K562 (cell line): ENCODE measurements at regions of chr6 and their contacts with region 1.

Region 1: GRCh38 chr6:149840345-149841075 is 23.6 kb downstream of the LRP11 start:
- DNase-seq: peak; percentile 69 to 88 (median 78)
- ATAC-seq: peak; percentile 99
- H3K4me3 ChIP-seq: no peak overlapping the region
- H3K27ac ChIP-seq: no peak overlapping the region
- H3K4me1 ChIP-seq: no peaks in the 10 kb centered on the region
- H3K27me3 ChIP-seq: peaks cover 28 to 74% of the 10 kb centered on the region in 2 experiments
- CTCF ChIP-seq: peak; percentile 89 to 92 (median 91)
- EP300 ChIP-seq: no peak
- POLR2A ChIP-seq: no peak
- RAD21 ChIP-seq: peak; percentile 69 to 92

Region 2: DNA sequence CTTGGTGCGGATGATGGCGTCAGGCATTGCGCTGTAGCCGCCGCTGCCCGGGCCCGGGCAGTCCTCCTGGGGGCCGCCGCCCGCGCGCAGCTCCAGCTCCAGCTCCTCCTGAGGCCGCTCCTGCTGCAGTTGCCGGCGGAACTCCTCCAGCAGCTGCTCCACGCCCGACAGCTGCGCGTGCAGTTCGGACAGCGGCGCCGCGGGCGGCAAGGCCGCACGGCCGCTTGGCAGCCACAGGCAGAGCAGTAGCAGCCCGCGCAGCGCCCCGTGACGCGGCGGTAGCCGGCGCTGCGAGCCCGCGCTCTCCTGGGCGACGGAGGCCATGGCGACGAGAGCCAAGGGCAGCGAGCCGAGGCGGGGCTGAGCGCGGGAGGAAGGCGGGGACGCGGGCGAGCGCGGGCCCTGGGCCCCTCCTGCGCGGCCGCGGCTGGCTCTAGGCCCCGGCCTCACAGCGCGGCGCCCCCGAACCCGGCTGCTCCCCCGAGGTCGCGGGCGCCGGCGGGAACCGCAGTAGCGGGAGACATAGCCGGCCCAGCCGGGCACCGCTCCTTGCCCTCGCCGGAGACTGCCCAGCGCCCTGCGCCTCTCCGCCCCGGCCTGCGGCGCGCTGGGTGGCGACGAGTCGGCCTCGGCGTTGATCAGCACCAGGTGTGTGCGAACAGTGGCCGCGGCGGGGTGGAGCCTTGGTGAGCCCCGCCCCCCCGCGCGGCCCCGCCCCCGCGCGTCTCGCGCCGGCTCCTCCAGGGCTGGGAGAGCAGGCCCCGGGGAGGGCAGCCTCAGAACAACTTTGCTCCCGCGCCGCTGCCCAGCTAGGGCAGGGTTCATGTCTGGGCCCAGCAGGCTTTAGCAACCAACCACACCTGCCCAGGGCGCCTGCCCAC is 23.4 kb after region 1 on chr6 and contains the start of gene LRP11:
- CTCF ChIA-PET with region 1: interaction called, 3 read pairs
- POLR2A ChIA-PET with region 1: interaction called, 3 read pairs
- in situ Hi-C with region 1: no loop called
- intact Hi-C with region 1: loop called (anchors 2 kb)
- DNase-seq: peak; percentile 86 to 98 (median 97)
- ATAC-seq: peak; percentile 91
- H3K4me3 ChIP-seq: peak within 1 kb of the TSS; percentile 59
- H3K27ac ChIP-seq: 0 out of 3 replicates have a peak within 1 kb of the TSS, but pooled peaks have one; percentile 22
- H3K4me1 ChIP-seq: peaks cover 37 to 45% of the 10 kb centered on the region in 2 experiments; a peak in 4 of 5 replicates
- H3K27me3 ChIP-seq: peaks cover 0 to 13% of the 10 kb centered on the region in 2 experiments; a peak in 3 of 5 replicates
- CTCF ChIP-seq: no peak
- EP300 ChIP-seq: no peak
- POLR2A ChIP-seq: peak; percentile 36; the same call in 1 of the 2 replicates
- RAD21 ChIP-seq: no peak
- polyA plus RNA-seq, gene LRP11: 0.51 to 0.94 TPM

Region 3: DNA sequence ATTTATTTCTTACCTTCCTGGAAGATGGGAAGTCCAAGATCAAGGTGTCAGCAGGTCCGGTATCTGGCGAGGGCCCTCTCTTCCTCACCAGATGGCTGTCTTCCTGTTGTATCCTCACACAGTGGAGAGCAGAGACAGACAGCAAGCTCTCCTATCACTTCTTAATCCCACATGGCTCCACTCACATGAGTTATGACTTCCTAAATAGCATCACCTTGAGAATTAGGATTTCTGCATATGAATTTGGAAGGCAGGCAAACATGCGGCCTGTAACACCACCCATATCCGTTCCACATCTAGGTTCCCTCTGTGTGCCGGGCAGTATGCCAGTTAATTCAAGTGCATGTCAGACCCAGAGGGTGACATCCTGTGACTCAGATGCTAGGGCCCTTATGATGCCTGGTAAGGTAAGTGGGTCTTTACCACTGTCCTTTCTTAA is 55.3 kb after region 1 on chr6:
- CTCF ChIA-PET with region 1: interaction called, 4 read pairs
- POLR2A ChIA-PET with region 1: interaction called, 3 read pairs
- in situ Hi-C with region 1: no loop called
- intact Hi-C with region 1: loop called (anchors 1 kb)
- DNase-seq: peak in 1 of 4 experiments; percentile 7
- ATAC-seq: no peak
- H3K4me3 ChIP-seq: no peak overlapping the region
- H3K27ac ChIP-seq: no peak overlapping the region
- H3K4me1 ChIP-seq: no peaks in the 10 kb centered on the region
- H3K27me3 ChIP-seq: peaks cover 37 to 60% of the 10 kb centered on the region in 2 experiments
- CTCF ChIP-seq: no peak
- EP300 ChIP-seq: no peak
- POLR2A ChIP-seq: no peak
- RAD21 ChIP-seq: no peak

Region 4: GRCh38 chr6:149925974-149926777 is 85.7 kb after region 1 on chr6:
- CTCF ChIA-PET with region 1: interaction called, 23 read pairs
- POLR2A ChIA-PET with region 1: no interaction called
- in situ Hi-C with region 1: loop called (anchors 5 kb)
- intact Hi-C with region 1: loop called (anchors 1 kb)
- DNase-seq: peak; percentile 75 to 91 (median 82)
- ATAC-seq: peak; percentile 97
- H3K4me3 ChIP-seq: peak overlapping the region; percentile 30
- H3K27ac ChIP-seq: no peak overlapping the region
- H3K4me1 ChIP-seq: peaks cover 0 to 26% of the 10 kb centered on the region in 2 experiments; a peak in 3 of 5 replicates
- H3K27me3 ChIP-seq: peaks cover 21 to 52% of the 10 kb centered on the region in 2 experiments
- CTCF ChIP-seq: peak; percentile 93 to 96 (median 95)
- EP300 ChIP-seq: 0 out of 2 replicates have a peak, but pooled peaks have one; percentile 20
- POLR2A ChIP-seq: no peak
- RAD21 ChIP-seq: peak; percentile 94 to 98

Region 5: GRCh38 chr6:150016324-150017185 is 176.0 kb after region 1 on chr6:
- CTCF ChIA-PET with region 1: no interaction called
- POLR2A ChIA-PET with region 1: no interaction called
- in situ Hi-C with region 1: no loop called
- intact Hi-C with region 1: loop called (anchors 5 kb)
- DNase-seq: peak in 3 of 4 experiments; percentile 36 to 69 (median 63)
- ATAC-seq: peak; percentile 66
- H3K4me3 ChIP-seq: no peak overlapping the region
- H3K27ac ChIP-seq: no peak overlapping the region
- H3K4me1 ChIP-seq: peaks cover 18 to 21% of the 10 kb centered on the region in 2 experiments; a peak in 4 of 5 replicates
- H3K27me3 ChIP-seq: peaks cover 5 to 14% of the 10 kb centered on the region in 2 experiments; a peak in 4 of 5 replicates
- CTCF ChIP-seq: peak; percentile 62 to 74 (median 70)
- EP300 ChIP-seq: no peak
- POLR2A ChIP-seq: no peak
- RAD21 ChIP-seq: peak; percentile 94 to 95

Region 6: GRCh38 chr6:150145830-150146229 is 305.3 kb after region 1 on chr6:
- CTCF ChIA-PET with region 1: no interaction called
- POLR2A ChIA-PET with region 1: no interaction called
- in situ Hi-C with region 1: no loop called
- intact Hi-C with region 1: no loop called
- DNase-seq: no peak
- ATAC-seq: no peak
- H3K4me3 ChIP-seq: no peak overlapping the region
- H3K27ac ChIP-seq: peak overlapping the region; percentile 22; the same call in 2 of the 3 replicates
- H3K4me1 ChIP-seq: peaks cover 44 to 49% of the 10 kb centered on the region in 2 experiments
- H3K27me3 ChIP-seq: peaks cover 6 to 15% of the 10 kb centered on the region in 2 experiments; a peak in 4 of 5 replicates
- CTCF ChIP-seq: no peak
- EP300 ChIP-seq: no peak
- POLR2A ChIP-seq: no peak
- RAD21 ChIP-seq: no peak